Left ventricle myocardium inferior (tissue), 1 donor: ENCODE measurements at regions of chr9 and their contacts with region 1.

Region 1: DNA sequence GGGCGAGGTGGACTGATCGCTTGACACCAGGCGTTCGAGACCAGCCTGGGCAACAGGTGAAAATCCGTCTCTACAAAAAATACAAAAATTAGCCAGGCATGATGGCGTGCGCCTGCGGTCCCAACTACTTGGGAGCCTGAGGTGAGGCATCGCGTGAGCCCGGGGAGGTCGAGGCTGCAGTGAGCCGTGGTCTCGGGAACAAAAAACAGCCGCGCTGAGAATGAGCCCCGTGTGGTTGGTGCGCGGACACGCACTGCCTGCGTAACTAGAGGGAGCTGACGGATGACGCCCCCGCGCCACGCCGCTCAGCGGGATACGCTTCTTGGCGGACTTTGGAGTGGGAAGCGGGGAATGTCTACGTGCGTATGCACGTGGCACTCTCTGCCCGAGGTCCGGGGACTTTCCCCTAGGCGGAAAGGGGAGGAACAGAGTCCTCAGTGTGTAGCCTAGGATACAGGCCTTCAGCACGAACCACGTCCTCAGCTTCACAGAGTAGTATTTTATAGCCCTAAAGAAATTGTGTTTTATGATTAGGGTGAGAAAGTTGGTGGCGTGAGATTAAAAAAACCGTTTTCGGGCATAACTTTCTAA is at the start of gene RMRP:
- DNase-seq: peak; percentile 97
- H3K4me3 ChIP-seq: peak within 1 kb of the TSS; percentile 98
- H3K27ac ChIP-seq: peak within 1 kb of the TSS; percentile 99
- H3K4me1 ChIP-seq: peaks cover 47% of the 10 kb centered on the region
- H3K27me3 ChIP-seq: no peaks in the 10 kb centered on the region
- CTCF ChIP-seq: peak; percentile 62
- total RNA-seq, gene RMRP: 15,093 TPM

Region 2: GRCh38 chr9:35603506-35603986 is 54.1 kb before region 1 on chr9:
- intact Hi-C with region 1: no loop called
- DNase-seq: peak; percentile 67
- H3K4me3 ChIP-seq: peak overlapping the region; percentile 82
- H3K27ac ChIP-seq: peak overlapping the region; percentile 98
- H3K4me1 ChIP-seq: peaks cover 36% of the 10 kb centered on the region
- H3K27me3 ChIP-seq: no peaks in the 10 kb centered on the region
- CTCF ChIP-seq: no peak

Region 3: GRCh38 chr9:35690431-35691333 is 33.0 kb after region 1 on chr9:
- intact Hi-C with region 1: loop called (anchors 5 kb)
- DNase-seq: peak; percentile 87
- H3K4me3 ChIP-seq: peak overlapping the region; percentile 78
- H3K27ac ChIP-seq: peak overlapping the region; percentile 98
- H3K4me1 ChIP-seq: peaks cover 58% of the 10 kb centered on the region
- H3K27me3 ChIP-seq: no peaks in the 10 kb centered on the region
- CTCF ChIP-seq: no peak

Region 4: GRCh38 chr9:35736201-35736633 is 78.6 kb after region 1 on chr9:
- intact Hi-C with region 1: no loop called
- DNase-seq: peak; percentile 48
- H3K4me3 ChIP-seq: no peak overlapping the region
- H3K27ac ChIP-seq: peak overlapping the region; percentile 48
- H3K4me1 ChIP-seq: peaks cover 40% of the 10 kb centered on the region
- H3K27me3 ChIP-seq: no peaks in the 10 kb centered on the region
- CTCF ChIP-seq: peak; percentile 87